ENCODE measurements at regions of chr16 and their contacts with region 1.

Region 1: GRCh38 chr16:81006814-81007696 is at the starts of genes CENPN and CMC2:
- DNase-seq: peak; percentile 99
- ATAC-seq: peak; percentile 93 to 94 (median 93)
- H3K4me3 ChIP-seq: peak within 1 kb of the TSS; percentile 89
- H3K27ac ChIP-seq: peak within 1 kb of the TSS; percentile 99
- H3K4me1 ChIP-seq: peaks cover 23% of the 10 kb centered on the region
- H3K27me3 ChIP-seq: no peaks in the 10 kb centered on the region
- CTCF ChIP-seq: no peak
- total RNA-seq, gene CENPN: 2.9 to 8.4 (median 7.9) TPM
- total RNA-seq, gene CMC2: 58.8 to 121 (median 81.9) TPM

Region 2: GRCh38 chr16:80931801-80932712 is 75.0 kb before region 1 on chr16:
- intact Hi-C with region 1: loop called in 1 of 2 experiments (anchors 5 kb)
- DNase-seq: peak; percentile 81 to 90
- ATAC-seq: peak; percentile 79 to 91 (median 84)
- H3K4me3 ChIP-seq: peak overlapping the region; percentile 72
- H3K27ac ChIP-seq: peak overlapping the region; percentile 78
- H3K4me1 ChIP-seq: peaks cover 8% of the 10 kb centered on the region
- H3K27me3 ChIP-seq: no peaks in the 10 kb centered on the region
- CTCF ChIP-seq: no peak

Region 3: DNA sequence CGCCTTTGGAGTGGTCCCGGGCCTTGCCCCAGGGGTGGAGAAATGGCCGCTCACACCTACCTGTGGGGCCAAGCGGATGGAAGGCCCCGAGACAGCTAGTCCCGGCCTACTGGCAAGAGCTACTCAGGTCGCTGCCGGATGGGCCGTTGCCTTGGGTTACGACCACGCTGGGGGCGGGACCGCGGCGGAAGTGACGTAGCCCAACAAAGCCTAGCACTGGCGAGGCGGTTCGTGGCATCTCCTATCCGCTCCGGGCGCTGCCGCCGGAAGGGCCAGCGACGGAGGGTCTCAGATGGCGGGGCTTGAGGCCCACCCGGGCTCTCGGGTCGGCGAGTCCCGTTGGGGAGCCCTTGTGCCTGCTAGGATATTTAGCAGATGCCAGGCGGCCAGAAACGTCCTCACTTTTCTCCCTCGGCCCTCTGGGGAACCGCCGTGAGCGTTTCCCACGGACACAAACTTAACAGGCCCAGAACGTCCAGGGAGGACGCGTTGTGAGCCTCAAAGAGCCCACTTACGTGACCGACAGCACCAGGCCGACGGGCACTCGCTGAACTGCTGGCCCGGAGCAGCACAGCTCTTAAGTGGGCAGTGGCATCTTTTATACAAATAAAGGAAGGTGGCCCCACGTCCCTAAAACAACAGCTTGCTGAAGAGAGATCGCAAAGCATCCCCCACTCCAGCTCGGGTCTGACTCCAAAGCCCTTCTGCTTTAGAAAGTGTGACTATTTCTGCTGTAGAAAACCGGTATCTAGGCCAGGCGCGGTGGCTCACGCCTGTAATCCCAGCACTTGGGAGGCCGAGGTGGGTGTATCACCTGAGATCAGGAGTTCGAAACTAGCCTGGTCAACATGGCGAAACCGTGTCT is 70.3 kb after region 1 on chr16 and contains the start of gene C16orf46:
- intact Hi-C with region 1: loop called in 1 of 2 experiments (anchors 2 kb)
- DNase-seq: peak; percentile 97 to 98
- ATAC-seq: peak; percentile 97 to 99 (median 98)
- H3K4me3 ChIP-seq: peak within 1 kb of the TSS; percentile 75
- H3K27ac ChIP-seq: peak within 1 kb of the TSS; percentile 95
- H3K4me1 ChIP-seq: no peaks in the 10 kb centered on the region
- H3K27me3 ChIP-seq: no peaks in the 10 kb centered on the region
- CTCF ChIP-seq: no peak
- total RNA-seq, gene C16orf46: 0.27 to 0.63 (median 0.46) TPM

Region 4: DNA sequence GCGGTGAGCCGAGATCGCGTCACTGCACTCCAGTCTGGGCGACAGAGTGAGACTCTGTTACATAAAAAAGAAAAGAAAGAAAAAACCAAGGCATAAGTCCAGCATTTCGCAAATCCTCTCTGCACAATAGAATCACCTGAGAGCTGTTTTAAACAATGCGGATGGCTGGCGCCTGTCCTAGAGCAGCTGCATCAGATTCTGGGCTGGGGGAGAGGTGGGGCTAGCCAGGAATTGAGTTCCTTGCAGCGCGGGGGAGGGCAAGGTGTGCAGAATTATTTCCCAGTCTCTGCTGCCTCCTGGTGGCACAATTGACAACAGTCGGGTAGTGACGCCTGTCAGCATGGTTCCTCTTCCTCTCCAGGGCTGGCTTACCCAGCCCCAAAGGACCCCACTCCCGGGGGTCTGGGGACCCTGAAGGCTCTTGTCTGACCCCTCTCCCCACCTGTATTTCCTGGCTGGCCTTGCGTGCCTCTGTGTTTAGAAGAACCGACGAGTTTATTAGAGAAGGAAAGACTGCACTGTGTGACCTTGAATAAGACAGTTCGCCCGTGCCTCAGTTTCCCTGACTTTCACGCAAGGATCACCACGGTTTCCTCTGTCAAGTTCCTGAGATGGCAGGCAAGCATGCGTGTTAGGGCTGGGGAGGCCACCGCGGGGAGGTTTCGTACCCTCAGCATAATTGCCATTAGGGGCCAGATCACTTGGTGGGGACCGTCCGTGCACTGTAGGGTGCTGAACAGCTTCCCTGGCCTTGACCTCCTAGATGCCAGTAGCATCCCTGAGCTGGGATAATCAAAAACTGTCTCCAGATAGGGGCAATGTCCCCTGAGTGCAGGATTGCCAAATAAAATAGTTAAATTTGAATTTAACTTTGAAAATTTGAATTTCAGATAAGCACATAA is 731.1 kb after region 1 on chr16:
- intact Hi-C with region 1: loop called in 1 of 2 experiments (anchors 10 kb)
- DNase-seq: peak; percentile 69 to 77
- ATAC-seq: peak; percentile 74 to 89 (median 82)
- H3K4me3 ChIP-seq: no peak overlapping the region
- H3K27ac ChIP-seq: no peak overlapping the region
- H3K4me1 ChIP-seq: no peaks in the 10 kb centered on the region
- H3K27me3 ChIP-seq: no peaks in the 10 kb centered on the region
- CTCF ChIP-seq: peak; percentile 72